Activated T-helper 1 cell treated with anti-CD3 and anti-CD28 coated beads, Interleukin-12 subunit alpha, Interleukin-12 subunit beta, Interleukin-2, Interleukin-4 antibody, amounts not matched to agents 30 ng/mL and 10 ng/mL and 1 ng/mL, durations not matched to agents 14 hours and 24 hours and 36 hours (primary cell): ENCODE measurements at regions of chr20 and their contacts with region 1.

Region 1: DNA sequence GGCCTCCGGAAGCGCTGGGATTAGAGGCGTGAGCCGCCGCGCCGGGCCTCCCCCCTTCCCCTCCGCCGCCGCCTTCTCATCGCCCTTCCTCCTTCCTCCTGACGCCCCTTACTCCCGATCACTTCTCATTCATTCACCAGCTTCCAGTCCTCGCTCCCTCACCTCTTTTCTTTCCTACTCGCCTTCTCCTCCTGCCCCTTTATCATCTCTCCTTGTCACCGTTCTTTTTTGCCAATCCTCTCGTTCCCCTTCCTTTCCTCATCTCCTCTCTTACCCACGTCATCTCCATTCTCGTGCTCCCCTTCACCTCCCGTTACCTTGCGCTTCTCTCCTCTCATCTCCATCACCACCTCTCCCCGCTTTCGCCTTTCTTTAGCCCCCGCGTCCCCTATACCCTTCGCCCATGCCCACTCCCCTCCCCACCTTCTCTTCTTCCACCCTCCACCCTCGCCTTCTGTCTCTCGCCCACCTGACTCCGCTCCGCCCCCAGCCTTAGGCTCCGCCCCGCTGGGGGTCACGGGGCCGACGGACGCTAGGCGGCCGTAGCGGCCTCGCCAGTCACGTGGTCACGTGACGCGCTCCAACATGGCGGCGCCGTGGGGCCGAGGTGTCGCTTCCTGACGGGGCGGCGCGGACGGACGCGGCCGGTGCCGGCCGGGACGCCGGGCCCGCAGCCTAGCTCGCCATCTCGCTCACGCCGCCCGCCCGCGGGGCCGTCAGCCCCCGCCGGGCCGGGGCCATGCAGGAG is at the start of gene ARFGEF2:
- DNase-seq: peak; percentile 96
- H3K4me3 Mint-ChIP-seq: peak within 1 kb of the TSS; percentile 98
- H3K27ac Mint-ChIP-seq: peak within 1 kb of the TSS; percentile 99
- H3K4me1 Mint-ChIP-seq: peaks cover 50% of the 10 kb centered on the region
- H3K27me3 Mint-ChIP-seq: peaks cover 4% of the 10 kb centered on the region
- total RNA-seq, gene ARFGEF2: 28.3 and 30.1 TPM in 2 replicates

Region 2: GRCh38 chr20:48657475-48658470 is 263.6 kb before region 1 on chr20:
- intact Hi-C with region 1: loop called (anchors 5 kb)
- DNase-seq: peak; percentile 50
- H3K4me3 Mint-ChIP-seq: no peak overlapping the region
- H3K27ac Mint-ChIP-seq: peak overlapping the region; percentile 24
- H3K4me1 Mint-ChIP-seq: peaks cover 10% of the 10 kb centered on the region
- H3K27me3 Mint-ChIP-seq: no peaks in the 10 kb centered on the region

Region 3: DNA sequence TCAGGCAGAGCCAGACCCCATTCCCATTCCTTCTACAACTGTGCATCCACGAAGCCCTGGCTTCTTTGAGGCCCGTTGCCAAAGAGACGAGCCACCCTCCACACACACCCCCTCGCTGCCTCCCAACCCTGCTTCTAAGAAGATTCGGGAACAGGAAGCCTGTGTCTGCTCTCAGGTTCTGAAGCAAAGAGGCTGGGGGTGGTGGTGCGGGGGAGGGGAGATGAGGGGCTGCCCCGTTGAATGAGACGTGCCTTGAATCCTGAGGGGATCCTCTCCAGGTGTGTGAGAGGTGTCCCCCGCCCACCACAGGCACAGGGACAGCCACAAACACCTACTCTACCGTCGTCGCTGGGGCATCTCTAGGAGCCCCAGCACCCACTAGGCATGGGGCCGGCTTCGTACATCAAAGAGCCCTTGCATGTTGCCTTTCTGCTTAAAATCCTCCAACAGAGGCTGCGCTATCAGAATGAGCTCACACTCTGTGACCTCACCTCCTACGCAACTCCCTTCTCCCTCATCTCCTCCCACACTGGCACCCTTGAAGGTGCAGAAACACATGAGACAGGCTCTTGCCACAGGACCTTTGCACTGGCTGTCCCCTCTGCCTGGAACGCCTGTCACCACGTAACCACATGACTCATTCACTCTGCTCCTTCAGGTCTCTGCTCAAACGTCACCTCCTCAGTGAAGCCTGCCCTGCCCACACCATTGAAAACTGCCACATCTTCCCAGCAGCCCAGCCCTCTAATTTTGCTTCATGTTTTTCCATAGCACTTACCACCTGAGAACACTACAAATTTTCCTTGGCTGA is 152.1 kb before region 1 on chr20:
- intact Hi-C with region 1: loop called (anchors 5 kb)
- DNase-seq: peak; percentile 86
- H3K4me3 Mint-ChIP-seq: peak overlapping the region; percentile 66
- H3K27ac Mint-ChIP-seq: peak overlapping the region; percentile 89
- H3K4me1 Mint-ChIP-seq: peaks cover 87% of the 10 kb centered on the region
- H3K27me3 Mint-ChIP-seq: no peaks in the 10 kb centered on the region

Region 4: GRCh38 chr20:48846498-48847485 is 74.5 kb before region 1 on chr20:
- intact Hi-C with region 1: loop called (anchors 2 kb)
- DNase-seq: no peak
- H3K4me3 Mint-ChIP-seq: peak overlapping the region; percentile 32
- H3K27ac Mint-ChIP-seq: peak overlapping the region; percentile 98
- H3K4me1 Mint-ChIP-seq: peaks cover 23% of the 10 kb centered on the region
- H3K27me3 Mint-ChIP-seq: peaks cover 18% of the 10 kb centered on the region

Region 5: GRCh38 chr20:49186535-49187329 is 265.4 kb after region 1 on chr20:
- intact Hi-C with region 1: loop called (anchors 5 kb)
- DNase-seq: peak; percentile 66
- H3K4me3 Mint-ChIP-seq: peak overlapping the region; percentile 89
- H3K27ac Mint-ChIP-seq: peak overlapping the region; percentile 81
- H3K4me1 Mint-ChIP-seq: peaks cover 50% of the 10 kb centered on the region
- H3K27me3 Mint-ChIP-seq: peaks cover 4% of the 10 kb centered on the region

Region 6: DNA sequence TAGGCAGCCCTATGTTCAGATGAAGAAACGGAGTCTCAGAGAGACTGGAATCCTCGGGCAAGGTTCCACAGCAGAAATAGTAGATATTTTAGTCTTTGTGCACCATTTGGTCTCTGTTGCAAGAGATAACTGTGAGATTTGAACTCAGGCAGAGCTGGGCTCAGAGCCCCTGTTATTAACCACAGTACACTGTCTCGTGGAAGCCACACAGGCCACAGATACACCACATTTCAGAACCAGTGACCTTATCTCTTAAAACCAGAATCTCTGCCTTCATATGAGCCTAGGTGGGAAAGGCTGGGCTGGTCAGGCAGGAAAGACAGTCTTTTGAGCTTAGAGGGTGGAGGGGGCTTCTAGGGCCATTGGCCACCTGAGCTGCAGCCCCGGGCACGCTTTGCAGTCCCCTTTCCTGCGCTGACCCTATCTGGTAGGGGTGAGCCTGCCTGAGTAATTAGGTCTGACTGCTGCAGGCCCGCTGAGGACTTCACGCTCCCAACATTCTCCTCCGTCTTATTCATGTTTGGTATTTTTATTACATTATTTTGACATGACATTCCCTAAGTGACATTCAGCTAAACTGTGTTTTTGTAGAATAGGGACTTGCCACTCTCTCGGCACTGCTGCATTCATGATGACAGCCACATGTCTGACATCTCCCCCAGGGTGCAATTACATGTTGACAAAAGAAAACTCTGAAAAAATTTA is 490.0 kb after region 1 on chr20:
- intact Hi-C with region 1: no loop called
- DNase-seq: no peak
- H3K4me3 Mint-ChIP-seq: no peak overlapping the region
- H3K27ac Mint-ChIP-seq: no peak overlapping the region
- H3K4me1 Mint-ChIP-seq: no peaks in the 10 kb centered on the region
- H3K27me3 Mint-ChIP-seq: peaks cover 24% of the 10 kb centered on the region